Naive thymus-derived CD4-positive, alpha-beta T cell (primary cell): ENCODE measurements at regions of chr6 and their contacts with region 1.

Region 1: DNA sequence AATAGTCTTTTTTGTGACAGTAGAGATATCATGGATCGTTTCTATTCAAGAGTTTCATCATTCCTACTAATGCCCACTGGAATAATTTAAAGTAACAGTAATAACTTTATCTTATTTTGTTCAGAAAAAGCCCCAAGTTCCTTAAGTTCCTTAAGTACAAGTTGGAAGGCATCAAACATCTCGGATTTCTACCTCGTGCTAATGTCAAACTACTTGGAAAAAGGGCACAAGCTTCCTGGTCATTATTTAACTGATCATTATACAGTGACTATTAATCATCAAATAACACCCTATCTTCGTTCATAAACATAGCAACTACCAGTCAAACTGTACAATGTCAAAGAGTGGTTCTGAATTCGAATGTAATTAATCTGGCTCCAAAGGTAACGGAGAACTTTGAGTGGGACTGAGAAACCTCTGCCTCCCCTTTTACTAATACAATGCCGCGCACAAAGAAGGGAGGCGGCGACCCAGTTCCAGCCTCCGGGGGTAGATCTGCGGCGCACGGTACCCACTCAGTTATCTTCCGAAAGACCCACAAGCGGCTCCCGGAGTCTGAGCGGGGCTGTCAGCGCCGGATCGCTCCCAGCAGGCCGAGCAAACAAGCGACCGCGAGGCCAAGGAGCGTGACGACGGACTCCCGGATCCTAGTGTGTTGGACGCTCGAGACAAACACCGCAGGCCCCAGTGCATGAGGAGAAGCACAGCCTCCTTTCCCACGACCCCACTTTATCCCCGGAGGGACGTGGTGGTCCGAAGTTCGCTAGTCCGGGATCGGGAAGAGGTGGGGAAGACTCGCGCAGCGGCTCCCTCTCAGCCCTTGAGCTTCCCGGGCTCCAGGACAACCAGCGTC is 716 bp downstream of the SHPRH start:
- DNase-seq: peak in 6 of 9 donors; percentile 20 to 44 (median 30)
- ATAC-seq: peak; percentile 11
- H3K4me3 ChIP-seq: peak overlapping the region; percentile 88
- H3K4me3 Mint-ChIP-seq: peak overlapping the region; percentile 90 to 99 (median 98)
- H3K27ac ChIP-seq: peak overlapping the region; percentile 84
- H3K27ac Mint-ChIP-seq: peak overlapping the region; percentile 91 to 100 (median 98)
- H3K4me1 ChIP-seq: peaks cover 20 to 26% of the 10 kb centered on the region in 2 donors
- H3K4me1 Mint-ChIP-seq: peaks cover 30 to 72% (median 56%) of the 10 kb centered on the region in 7 donors
- H3K27me3 ChIP-seq: no peaks in the 10 kb centered on the region
- H3K27me3 Mint-ChIP-seq: no peaks in the 10 kb centered on the region

Region 2: GRCh38 chr6:144063744-144064401 is 1899.6 kb before region 1 on chr6:
- CTCF ChIA-PET with region 1: no interaction called
- POLR2A ChIA-PET with region 1: no interaction called
- intact Hi-C with region 1: loop called (anchors 1 to 10 kb)
- DNase-seq: peak; percentile 84 to 91 (median 88)
- ATAC-seq: peak; percentile 96
- H3K4me3 ChIP-seq: peak overlapping the region; percentile 56
- H3K4me3 Mint-ChIP-seq: peak overlapping the region; percentile 87 to 94 (median 91)
- H3K27ac ChIP-seq: peak overlapping the region; percentile 85
- H3K27ac Mint-ChIP-seq: peak overlapping the region; percentile 83 to 97 (median 88)
- H3K4me1 ChIP-seq: peaks cover 0 to 12% of the 10 kb centered on the region in 2 donors
- H3K4me1 Mint-ChIP-seq: peaks cover 17 to 44% (median 29%) of the 10 kb centered on the region in 7 donors
- H3K27me3 ChIP-seq: no peaks in the 10 kb centered on the region
- H3K27me3 Mint-ChIP-seq: peaks cover 0 to 2% (median 0%) of the 10 kb centered on the region in 5 donors

Region 3: DNA sequence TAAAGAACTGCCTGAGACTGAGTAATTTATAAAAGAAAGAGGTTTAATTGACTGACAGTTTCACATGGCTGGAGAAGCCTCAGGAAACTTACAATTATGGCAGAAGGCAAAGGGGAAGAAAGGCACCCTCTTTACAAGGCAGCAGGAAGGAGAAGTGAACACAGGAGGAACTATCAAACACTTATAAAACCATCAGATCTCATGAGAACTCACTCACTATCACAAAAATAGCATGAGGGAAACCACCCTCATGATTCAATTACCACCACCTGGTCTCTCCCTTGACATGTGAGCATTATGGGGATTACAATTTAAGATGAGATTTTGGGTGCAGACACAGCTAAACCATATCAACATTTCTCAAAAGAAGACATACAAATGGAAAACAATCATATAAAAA is 494.4 kb before region 1 on chr6:
- CTCF ChIA-PET with region 1: no interaction called
- POLR2A ChIA-PET with region 1: no interaction called
- intact Hi-C with region 1: no loop called
- DNase-seq: no peak
- ATAC-seq: no peak
- H3K4me3 ChIP-seq: no peak overlapping the region
- H3K4me3 Mint-ChIP-seq: no peak overlapping the region
- H3K27ac ChIP-seq: no peak overlapping the region
- H3K27ac Mint-ChIP-seq: no peak overlapping the region
- H3K4me1 ChIP-seq: no peaks in the 10 kb centered on the region
- H3K4me1 Mint-ChIP-seq: no peaks in the 10 kb centered on the region
- H3K27me3 ChIP-seq: no peaks in the 10 kb centered on the region
- H3K27me3 Mint-ChIP-seq: peaks cover 0 to 3% (median 0%) of the 10 kb centered on the region in 5 donors

Region 4: GRCh38 chr6:145814501-145815308 is 148.7 kb before region 1 on chr6 and contains the start of gene FBXO30:
- CTCF ChIA-PET with region 1: no interaction called
- POLR2A ChIA-PET with region 1: interaction called, 10 read pairs
- intact Hi-C with region 1: loop called (anchors 1 kb)
- DNase-seq: peak; percentile 81 to 94 (median 88)
- ATAC-seq: peak; percentile 98
- H3K4me3 ChIP-seq: peak within 1 kb of the TSS; percentile 92
- H3K4me3 Mint-ChIP-seq: peak within 1 kb of the TSS; percentile 91 to 96 (median 94)
- H3K27ac ChIP-seq: peak within 1 kb of the TSS; percentile 80
- H3K27ac Mint-ChIP-seq: peak within 1 kb of the TSS; percentile 83 to 96 (median 95)
- H3K4me1 ChIP-seq: peaks cover 0 to 18% of the 10 kb centered on the region in 2 donors
- H3K4me1 Mint-ChIP-seq: peaks cover 25 to 50% (median 41%) of the 10 kb centered on the region in 7 donors
- H3K27me3 ChIP-seq: no peaks in the 10 kb centered on the region
- H3K27me3 Mint-ChIP-seq: peaks cover 0 to 3% (median 0%) of the 10 kb centered on the region in 5 donors
- total RNA-seq, gene FBXO30: 1.6 to 5.1 (median 4.8) TPM

Region 5: GRCh38 chr6:145866456-145867396 is 96.7 kb before region 1 on chr6:
- CTCF ChIA-PET with region 1: no interaction called
- POLR2A ChIA-PET with region 1: no interaction called
- intact Hi-C with region 1: loop called in 1 of 2 experiments (anchors 10 kb)
- DNase-seq: peak in 3 of 9 donors; percentile 3 to 9 (median 9)
- ATAC-seq: peak; percentile 50
- H3K4me3 ChIP-seq: no peak overlapping the region
- H3K4me3 Mint-ChIP-seq: peak overlapping the region in 9 of 10 donors; percentile 20 to 73 (median 57)
- H3K27ac ChIP-seq: peak overlapping the region; percentile 39
- H3K27ac Mint-ChIP-seq: peak overlapping the region; percentile 48 to 89 (median 71)
- H3K4me1 ChIP-seq: peaks cover 17 to 29% of the 10 kb centered on the region in 2 donors
- H3K4me1 Mint-ChIP-seq: peaks cover 19 to 37% (median 31%) of the 10 kb centered on the region in 7 donors
- H3K27me3 ChIP-seq: no peaks in the 10 kb centered on the region
- H3K27me3 Mint-ChIP-seq: no peaks in the 10 kb centered on the region

Region 6: GRCh38 chr6:145929037-145929633 is 34.3 kb before region 1 on chr6:
- CTCF ChIA-PET with region 1: interaction called, 3 read pairs
- POLR2A ChIA-PET with region 1: interaction called, 3 read pairs
- intact Hi-C with region 1: loop called (anchors 2 kb)
- DNase-seq: peak in 5 of 9 donors; percentile 8 to 37 (median 23)
- ATAC-seq: no peak
- H3K4me3 ChIP-seq: no peak overlapping the region
- H3K4me3 Mint-ChIP-seq: no peak overlapping the region
- H3K27ac ChIP-seq: no peak overlapping the region
- H3K27ac Mint-ChIP-seq: no peak overlapping the region
- H3K4me1 ChIP-seq: no peaks in the 10 kb centered on the region
- H3K4me1 Mint-ChIP-seq: no peaks in the 10 kb centered on the region
- H3K27me3 ChIP-seq: no peaks in the 10 kb centered on the region
- H3K27me3 Mint-ChIP-seq: no peaks in the 10 kb centered on the region

Region 7: GRCh38 chr6:146189131-146189530 is 225.7 kb after region 1 on chr6:
- CTCF ChIA-PET with region 1: no interaction called
- POLR2A ChIA-PET with region 1: no interaction called
- intact Hi-C with region 1: no loop called
- DNase-seq: no peak
- ATAC-seq: no peak
- H3K4me3 ChIP-seq: no peak overlapping the region
- H3K4me3 Mint-ChIP-seq: no peak overlapping the region
- H3K27ac ChIP-seq: no peak overlapping the region
- H3K27ac Mint-ChIP-seq: no peak overlapping the region
- H3K4me1 ChIP-seq: no peaks in the 10 kb centered on the region
- H3K4me1 Mint-ChIP-seq: no peaks in the 10 kb centered on the region
- H3K27me3 ChIP-seq: no peaks in the 10 kb centered on the region
- H3K27me3 Mint-ChIP-seq: peaks cover 0 to 8% (median 0%) of the 10 kb centered on the region in 5 donors